ENCODE measurements at regions of chr10 and their contacts with region 1.

Region 1: GRCh38 chr10:14822879-14823755 is 14.7 kb downstream of the CDNF start:
- DNase-seq: peak; percentile 59
- ATAC-seq: peak; percentile 73
- H3K4me3 ChIP-seq: no peak overlapping the region
- H3K27ac ChIP-seq: no peak overlapping the region
- H3K4me1 ChIP-seq: peaks cover 3% of the 10 kb centered on the region
- H3K27me3 ChIP-seq: peaks cover 2% of the 10 kb centered on the region
- CTCF ChIP-seq: peak; percentile 86
- POLR2A ChIP-seq: no peak
- RAD21 ChIP-seq: peak; percentile 90

Region 2: GRCh38 chr10:14191871-14192270 is 631.2 kb before region 1 on chr10:
- CTCF ChIA-PET with region 1: no interaction called
- POLR2A ChIA-PET with region 1: no interaction called
- dilution Hi-C with region 1: no loop called
- in situ Hi-C with region 1: loop called (anchors 25 kb)
- intact Hi-C with region 1: loop called (anchors 10 kb)
- DNase-seq: no peak
- ATAC-seq: no peak
- H3K4me3 ChIP-seq: no peak overlapping the region
- H3K27ac ChIP-seq: no peak overlapping the region
- H3K4me1 ChIP-seq: no peaks in the 10 kb centered on the region
- H3K27me3 ChIP-seq: peaks cover 28% of the 10 kb centered on the region
- CTCF ChIP-seq: no peak
- POLR2A ChIP-seq: no peak
- RAD21 ChIP-seq: no peak

Region 3: GRCh38 chr10:14536241-14537213 is 286.6 kb before region 1 on chr10:
- CTCF ChIA-PET with region 1: interaction called, 3 read pairs
- POLR2A ChIA-PET with region 1: no interaction called
- dilution Hi-C with region 1: no loop called
- in situ Hi-C with region 1: no loop called
- intact Hi-C with region 1: loop called (anchors 1 kb)
- DNase-seq: peak; percentile 57
- ATAC-seq: peak; percentile 28; the same call in 1 of the 2 replicates
- H3K4me3 ChIP-seq: no peak overlapping the region
- H3K27ac ChIP-seq: no peak overlapping the region
- H3K4me1 ChIP-seq: peaks cover 34% of the 10 kb centered on the region
- H3K27me3 ChIP-seq: no peaks in the 10 kb centered on the region
- CTCF ChIP-seq: peak; percentile 55
- POLR2A ChIP-seq: no peak
- RAD21 ChIP-seq: peak; percentile 76

Region 4: DNA sequence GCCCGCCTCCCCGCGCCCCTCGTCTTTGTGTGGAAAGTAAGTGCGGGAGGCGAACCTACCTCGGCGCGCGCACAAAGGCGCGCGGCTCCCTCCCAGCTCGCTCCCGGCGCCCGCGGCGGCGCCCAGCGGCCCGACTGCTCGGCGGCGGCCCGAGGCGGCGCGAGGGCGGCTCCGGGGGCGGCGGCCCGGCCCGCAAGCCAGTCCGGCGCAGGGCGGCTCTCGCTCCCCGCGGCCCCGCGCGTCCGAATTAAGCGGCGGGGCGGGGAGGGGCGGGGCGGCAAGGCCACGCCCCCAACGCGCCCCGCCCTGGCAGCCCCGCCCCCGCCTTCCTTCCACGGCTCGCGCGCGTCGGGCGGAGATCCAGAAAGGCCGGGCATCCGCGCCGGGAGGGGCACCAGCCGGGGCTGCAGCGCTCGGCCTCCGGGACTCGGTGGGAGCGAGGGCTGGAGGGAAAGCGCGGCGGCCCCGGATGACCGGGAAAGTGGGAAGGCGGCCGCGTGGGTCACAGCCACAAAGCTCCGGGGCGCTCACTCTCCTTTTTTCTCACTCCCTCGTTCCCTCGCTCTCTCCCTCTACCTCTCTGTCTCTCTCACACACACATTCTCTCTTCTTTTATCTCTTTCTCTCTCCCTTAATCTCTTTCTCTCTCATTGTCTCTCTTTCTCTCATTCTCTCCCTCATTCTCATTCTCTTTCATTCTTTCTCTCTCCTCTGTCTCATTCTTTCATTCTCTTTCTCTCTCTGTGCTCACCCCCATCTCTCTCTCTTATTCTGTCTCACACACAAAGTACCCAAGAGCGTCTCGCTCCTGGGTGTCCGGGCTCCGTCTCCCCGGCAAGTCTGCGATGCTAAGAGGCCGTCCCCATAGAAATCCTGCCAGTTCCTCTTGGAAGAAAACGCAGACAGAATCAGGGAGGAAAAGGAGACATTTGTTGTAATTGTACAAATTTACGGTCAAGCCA is 218.7 kb before region 1 on chr10:
- CTCF ChIA-PET with region 1: interaction called, 6 read pairs
- POLR2A ChIA-PET with region 1: no interaction called
- dilution Hi-C with region 1: no loop called
- in situ Hi-C with region 1: loop called (anchors 10 kb)
- intact Hi-C with region 1: loop called (anchors 1 kb)
- DNase-seq: peak; percentile 70
- ATAC-seq: peak; percentile 92
- H3K4me3 ChIP-seq: peak overlapping the region; percentile 99
- H3K27ac ChIP-seq: peak overlapping the region; percentile 70
- H3K4me1 ChIP-seq: peaks cover 9% of the 10 kb centered on the region
- H3K27me3 ChIP-seq: no peaks in the 10 kb centered on the region
- CTCF ChIP-seq: no peak
- POLR2A ChIP-seq: peak; percentile 53
- RAD21 ChIP-seq: no peak

Region 5: GRCh38 chr10:15046626-15047025 is 223.5 kb after region 1 on chr10:
- CTCF ChIA-PET with region 1: no interaction called
- POLR2A ChIA-PET with region 1: no interaction called
- dilution Hi-C with region 1: no loop called
- in situ Hi-C with region 1: no loop called
- intact Hi-C with region 1: no loop called
- DNase-seq: peak; percentile 33
- ATAC-seq: peak; percentile 70
- H3K4me3 ChIP-seq: no peak overlapping the region
- H3K27ac ChIP-seq: no peak overlapping the region
- H3K4me1 ChIP-seq: peaks cover 6% of the 10 kb centered on the region
- H3K27me3 ChIP-seq: no peaks in the 10 kb centered on the region; the same call in 1 of the 2 replicates
- CTCF ChIP-seq: no peak
- POLR2A ChIP-seq: no peak
- RAD21 ChIP-seq: no peak

Region 6: DNA sequence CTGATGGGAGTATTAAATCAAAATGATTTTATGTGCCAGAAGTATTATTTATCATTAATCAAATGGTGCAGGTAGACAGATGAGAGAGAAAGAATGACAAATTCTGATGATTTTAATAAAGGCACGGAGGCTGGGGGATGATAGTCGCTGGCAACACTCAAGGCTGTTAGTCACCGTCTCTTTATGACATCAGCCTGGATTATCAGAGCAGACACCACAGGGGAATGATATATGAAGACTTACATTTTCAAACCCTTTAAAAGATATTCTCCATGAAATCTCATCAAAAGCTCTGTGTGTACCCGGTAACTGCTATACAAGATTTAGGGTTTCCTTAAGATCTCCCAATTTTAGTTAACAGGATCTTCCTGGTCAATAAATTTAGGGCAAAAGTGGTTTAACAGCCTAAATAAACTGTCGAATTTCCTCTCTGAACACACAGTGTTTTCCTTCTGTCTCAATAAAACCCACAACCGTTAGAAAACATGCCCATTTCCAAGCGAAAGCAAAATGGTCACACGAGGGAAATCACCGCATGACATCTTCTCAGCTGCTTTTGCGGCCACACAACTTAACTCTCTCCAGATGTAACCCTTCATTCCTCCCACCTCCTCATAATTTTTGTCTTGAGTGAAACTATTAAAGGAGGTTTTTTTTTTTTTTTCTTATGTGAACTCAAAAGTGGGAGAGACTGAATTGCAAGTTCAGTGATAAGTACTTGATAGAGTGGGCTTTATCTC is 681.2 kb after region 1 on chr10:
- CTCF ChIA-PET with region 1: no interaction called
- POLR2A ChIA-PET with region 1: no interaction called
- dilution Hi-C with region 1: no loop called
- in situ Hi-C with region 1: no loop called
- intact Hi-C with region 1: no loop called
- DNase-seq: no peak
- ATAC-seq: no peak
- H3K4me3 ChIP-seq: no peak overlapping the region
- H3K27ac ChIP-seq: no peak overlapping the region
- H3K4me1 ChIP-seq: no peaks in the 10 kb centered on the region
- H3K27me3 ChIP-seq: peaks cover 16% of the 10 kb centered on the region
- CTCF ChIP-seq: no peak
- POLR2A ChIP-seq: no peak
- RAD21 ChIP-seq: no peak

Measured in IMR-90 (cell line).